Activated CD4-positive, alpha-beta T cell treated with anti-CD3 and anti-CD28 coated beads for 36 hours (primary cell): ENCODE measurements at regions of chr17 and their contacts with region 1.

Region 1: GRCh38 chr17:9256751-9257629 is 235.7 kb downstream of the NTN1 start:
- DNase-seq: no peak
- ATAC-seq: no peak
- H3K4me3 Mint-ChIP-seq: no peak overlapping the region
- H3K27ac Mint-ChIP-seq: no peak overlapping the region
- H3K4me1 Mint-ChIP-seq: peaks cover 67% of the 10 kb centered on the region
- H3K27me3 Mint-ChIP-seq: no peaks in the 10 kb centered on the region

Region 2: GRCh38 chr17:8649157-8650118 is 607.6 kb before region 1 on chr17:
- CTCF ChIA-PET with region 1: no interaction called
- POLR2A ChIA-PET with region 1: no interaction called
- intact Hi-C with region 1: no loop called
- DNase-seq: no peak
- ATAC-seq: no peak
- H3K4me3 Mint-ChIP-seq: no peak overlapping the region
- H3K27ac Mint-ChIP-seq: no peak overlapping the region
- H3K4me1 Mint-ChIP-seq: no peaks in the 10 kb centered on the region
- H3K27me3 Mint-ChIP-seq: peaks cover 21% of the 10 kb centered on the region

Region 3: DNA sequence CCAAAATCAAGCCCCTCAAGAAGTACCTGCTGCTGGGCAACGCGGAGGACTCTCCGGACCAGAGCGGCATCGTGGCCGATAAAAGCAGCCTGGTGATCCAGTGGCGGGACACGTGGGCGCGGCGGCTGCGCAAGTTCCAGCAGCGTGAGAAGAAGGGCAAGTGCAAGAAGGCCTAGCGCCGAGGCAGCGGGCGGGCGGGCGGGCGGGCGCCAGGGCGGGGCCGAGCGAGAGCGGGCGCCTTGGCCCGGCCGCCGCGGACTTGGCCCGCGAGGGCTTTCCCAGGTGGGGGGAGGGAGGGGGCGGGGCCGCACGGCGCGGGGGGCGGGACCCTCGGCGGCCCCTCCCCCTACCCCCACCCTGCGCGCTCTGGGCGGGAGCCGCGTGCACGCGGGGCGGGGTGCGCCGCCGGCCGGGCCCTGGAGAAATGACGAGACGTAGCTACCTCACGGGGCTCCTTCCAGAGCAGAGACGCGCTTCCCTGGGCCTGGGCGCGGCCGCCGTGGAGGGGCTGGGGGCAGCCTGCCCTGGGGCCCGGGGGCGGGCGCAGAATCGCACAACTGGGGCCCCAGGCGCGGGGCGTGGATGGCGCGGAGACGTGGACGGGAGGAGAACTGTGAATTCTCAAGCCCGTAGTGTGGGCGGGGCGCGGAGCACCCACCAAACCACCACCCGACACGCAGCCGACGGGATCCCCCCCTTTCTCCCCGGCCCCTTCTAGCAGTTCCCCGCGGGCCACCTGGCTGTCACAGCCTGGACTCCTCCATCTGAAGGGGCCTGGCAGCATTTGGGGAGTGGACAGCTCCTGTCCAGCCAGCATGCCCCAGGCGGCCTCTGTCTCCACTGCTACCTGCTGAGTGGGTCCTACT is 17.0 kb before region 1 on chr17:
- CTCF ChIA-PET with region 1: no interaction called
- POLR2A ChIA-PET with region 1: interaction called, 4 read pairs
- intact Hi-C with region 1: loop called in 1 of 2 experiments (anchors 1 kb)
- DNase-seq: peak; percentile 85
- ATAC-seq: peak; percentile 84
- H3K4me3 Mint-ChIP-seq: peak overlapping the region; percentile 73
- H3K27ac Mint-ChIP-seq: peak overlapping the region; percentile 82
- H3K4me1 Mint-ChIP-seq: peaks cover 20% of the 10 kb centered on the region
- H3K27me3 Mint-ChIP-seq: no peaks in the 10 kb centered on the region